HCT116 (cell line): ENCODE measurements at regions of chr11 and their contacts with region 1.

Region 1: GRCh38 chr11:67648140-67649123 is 2.1 kb downstream of the ACY3 start:
- DNase-seq: peak; percentile 59
- ATAC-seq: peak; percentile 99
- H3K4me3 ChIP-seq: no peak overlapping the region
- H3K27ac ChIP-seq: no peak overlapping the region
- H3K4me1 ChIP-seq: peaks cover 2 to 17% of the 10 kb centered on the region in 2 experiments; a peak in 3 of 4 replicates
- H3K27me3 ChIP-seq: no peaks in the 10 kb centered on the region
- CTCF ChIP-seq: peak; percentile 73 to 93 (median 84)
- POLR2A ChIP-seq: no peak
- RAD21 ChIP-seq: peak; percentile 70

Region 2: GRCh38 chr11:67658691-67659271 is 10.3 kb after region 1 on chr11:
- CTCF ChIA-PET with region 1: interaction called, 10 read pairs
- POLR2A ChIA-PET with region 1: no interaction called
- RAD21 ChIA-PET with region 1: interaction called in 1 of 2 experiments, 3 read pairs
- intact Hi-C with region 1: no loop called
- DNase-seq: no peak
- ATAC-seq: no peak
- H3K4me3 ChIP-seq: no peak overlapping the region
- H3K27ac ChIP-seq: no peak overlapping the region
- H3K4me1 ChIP-seq: no peaks in the 10 kb centered on the region
- H3K27me3 ChIP-seq: no peaks in the 10 kb centered on the region
- CTCF ChIP-seq: no peak
- POLR2A ChIP-seq: no peak
- RAD21 ChIP-seq: no peak

Region 3: GRCh38 chr11:68030318-68031138 is 382.1 kb after region 1 on chr11 and contains the start of gene NDUFS8:
- CTCF ChIA-PET with region 1: no interaction called
- POLR2A ChIA-PET with region 1: no interaction called
- RAD21 ChIA-PET with region 1: no interaction called
- intact Hi-C with region 1: no loop called
- DNase-seq: peak; percentile 99
- ATAC-seq: peak; percentile 89
- H3K4me3 ChIP-seq: peak within 1 kb of the TSS; percentile 86 to 97
- H3K27ac ChIP-seq: peak within 1 kb of the TSS; percentile 81
- H3K4me1 ChIP-seq: peaks cover 37 to 59% of the 10 kb centered on the region in 2 experiments
- H3K27me3 ChIP-seq: no peaks in the 10 kb centered on the region
- CTCF ChIP-seq: no peak
- POLR2A ChIP-seq: peak; percentile 71
- RAD21 ChIP-seq: no peak
- total RNA-seq, gene NDUFS8: 189 TPM